ENCODE measurements at regions of chr1 and their contacts with region 1.

Region 1: GRCh38 chr1:198681831-198682759 is 43.3 kb downstream of the PTPRC start:
- DNase-seq: peak; percentile 84
- H3K4me3 Mint-ChIP-seq: peak overlapping the region; percentile 78
- H3K27ac Mint-ChIP-seq: peak overlapping the region; percentile 96
- H3K4me1 Mint-ChIP-seq: peaks cover 77% of the 10 kb centered on the region
- H3K27me3 Mint-ChIP-seq: no peaks in the 10 kb centered on the region

Region 2: GRCh38 chr1:198157241-198157846 is 524.8 kb before region 1 on chr1:
- intact Hi-C with region 1: loop called (anchors 5 kb)
- DNase-seq: peak; percentile 79
- H3K4me3 Mint-ChIP-seq: peak overlapping the region; percentile 99
- H3K27ac Mint-ChIP-seq: peak overlapping the region; percentile 96
- H3K4me1 Mint-ChIP-seq: peaks cover 36% of the 10 kb centered on the region
- H3K27me3 Mint-ChIP-seq: no peaks in the 10 kb centered on the region

Region 3: DNA sequence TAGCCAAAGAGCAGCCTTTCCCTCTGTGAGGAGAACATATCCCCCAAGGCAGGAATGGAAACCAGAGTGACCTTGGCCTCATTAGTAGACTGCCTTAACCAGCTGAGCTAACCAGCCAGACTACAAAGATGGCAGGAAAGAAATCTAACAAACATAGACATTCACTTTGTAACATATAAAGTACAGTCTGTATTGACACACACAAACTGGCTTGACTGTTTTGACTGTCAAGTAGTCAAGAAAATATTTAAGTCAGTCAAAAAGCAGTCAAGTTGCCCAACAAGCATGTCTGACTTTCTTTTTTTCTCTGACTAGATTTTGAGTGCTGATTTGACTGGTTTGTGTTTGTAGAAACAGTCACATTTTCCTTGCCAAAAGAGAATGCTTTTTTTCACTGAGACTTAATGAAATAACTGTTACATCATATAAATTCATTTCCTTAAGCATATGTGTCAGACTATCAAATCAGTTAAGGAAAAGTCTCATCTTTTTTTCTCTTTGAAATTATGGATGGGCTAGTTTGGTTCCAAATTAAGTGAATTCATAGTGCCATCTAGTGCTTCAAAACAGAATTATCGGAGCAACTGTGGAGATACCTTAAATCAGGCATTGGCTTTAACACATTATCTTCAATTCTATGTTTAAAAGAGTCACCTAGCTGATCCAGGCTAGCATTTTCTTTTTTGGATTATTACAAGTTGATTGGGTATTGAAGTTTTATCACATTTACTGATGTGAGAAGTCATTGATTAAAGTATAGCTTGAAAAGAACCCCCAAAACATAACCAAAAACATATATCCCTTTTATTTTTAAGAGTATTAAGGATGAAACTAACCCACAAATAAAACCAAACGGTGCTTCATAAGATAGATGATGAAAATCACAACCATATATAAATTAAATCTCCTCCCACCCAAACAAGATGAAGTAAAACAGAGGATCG is 216.6 kb before region 1 on chr1:
- intact Hi-C with region 1: loop called (anchors 5 kb)
- DNase-seq: no peak
- H3K4me3 Mint-ChIP-seq: no peak overlapping the region
- H3K27ac Mint-ChIP-seq: peak overlapping the region; percentile 12
- H3K4me1 Mint-ChIP-seq: peaks cover 17% of the 10 kb centered on the region
- H3K27me3 Mint-ChIP-seq: no peaks in the 10 kb centered on the region

Region 4: DNA sequence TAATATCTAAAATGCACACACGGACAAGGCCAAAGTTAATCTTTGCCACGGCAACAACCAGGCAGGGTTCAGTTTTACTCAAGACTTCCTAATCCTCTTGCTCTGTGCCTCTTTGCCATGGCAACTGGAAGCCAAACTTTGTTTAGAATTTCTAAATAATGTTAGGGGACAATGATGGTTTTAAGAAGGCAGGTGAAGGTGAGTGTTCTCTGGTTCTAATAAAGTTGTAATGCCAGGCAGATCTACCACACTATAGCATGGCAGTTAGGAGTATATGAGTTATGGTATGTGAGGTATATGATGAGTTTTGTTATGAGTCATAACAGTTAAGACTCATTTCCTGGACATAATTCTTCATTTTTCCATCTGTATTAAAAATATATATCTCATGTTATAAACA is 40.6 kb before region 1 on chr1:
- intact Hi-C with region 1: loop called (anchors 1 kb)
- DNase-seq: no peak
- H3K4me3 Mint-ChIP-seq: peak overlapping the region; percentile 87
- H3K27ac Mint-ChIP-seq: peak overlapping the region; percentile 91
- H3K4me1 Mint-ChIP-seq: peaks cover 50% of the 10 kb centered on the region
- H3K27me3 Mint-ChIP-seq: no peaks in the 10 kb centered on the region

Region 5: DNA sequence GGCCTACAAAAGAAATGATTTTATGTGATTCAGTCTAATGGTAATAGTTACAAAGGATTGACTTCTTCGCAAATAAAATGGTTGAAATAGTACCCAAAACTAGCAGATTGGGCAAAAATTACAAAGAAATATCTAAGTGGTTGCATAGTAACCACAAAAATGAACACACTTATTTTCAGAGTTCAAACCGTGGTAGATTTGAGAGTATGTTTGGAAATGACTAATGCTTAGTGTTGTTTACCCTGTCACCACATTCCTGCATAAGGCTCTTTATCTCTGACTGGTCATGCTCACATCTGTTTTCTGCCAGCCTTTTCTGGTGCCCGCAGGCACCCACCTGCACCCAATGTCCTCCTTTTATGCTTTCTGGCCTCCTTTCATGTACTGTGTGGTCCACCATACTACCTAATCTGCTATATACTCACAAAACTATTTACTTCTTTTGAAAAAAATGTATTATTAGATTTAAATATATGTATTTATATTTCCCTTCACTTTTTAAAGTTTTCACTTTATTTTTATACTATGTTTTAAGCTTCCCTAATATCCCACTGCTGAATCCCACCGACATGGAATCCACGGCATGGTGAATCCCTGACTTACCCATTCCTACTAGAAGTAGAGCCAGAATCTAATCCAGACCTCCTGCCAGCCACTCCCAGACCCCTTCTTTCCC is 12.9 kb before region 1 on chr1:
- intact Hi-C with region 1: loop called (anchors 1 kb)
- DNase-seq: peak; percentile 56
- H3K4me3 Mint-ChIP-seq: peak overlapping the region; percentile 49
- H3K27ac Mint-ChIP-seq: peak overlapping the region; percentile 83
- H3K4me1 Mint-ChIP-seq: peaks cover 82% of the 10 kb centered on the region
- H3K27me3 Mint-ChIP-seq: no peaks in the 10 kb centered on the region

Region 6: GRCh38 chr1:198741744-198742143 is 59.6 kb after region 1 on chr1:
- intact Hi-C with region 1: no loop called
- DNase-seq: no peak
- H3K4me3 Mint-ChIP-seq: no peak overlapping the region
- H3K27ac Mint-ChIP-seq: no peak overlapping the region
- H3K4me1 Mint-ChIP-seq: peaks cover 39% of the 10 kb centered on the region
- H3K27me3 Mint-ChIP-seq: no peaks in the 10 kb centered on the region

Region 7: GRCh38 chr1:199173356-199173755 is 491.3 kb after region 1 on chr1:
- intact Hi-C with region 1: loop called (anchors 5 kb)
- DNase-seq: no peak
- H3K4me3 Mint-ChIP-seq: no peak overlapping the region
- H3K27ac Mint-ChIP-seq: peak overlapping the region; percentile 24
- H3K4me1 Mint-ChIP-seq: peaks cover 39% of the 10 kb centered on the region
- H3K27me3 Mint-ChIP-seq: peaks cover 36% of the 10 kb centered on the region